ENCODE measurements at regions of chr6 and their contacts with region 1.

Region 1: DNA sequence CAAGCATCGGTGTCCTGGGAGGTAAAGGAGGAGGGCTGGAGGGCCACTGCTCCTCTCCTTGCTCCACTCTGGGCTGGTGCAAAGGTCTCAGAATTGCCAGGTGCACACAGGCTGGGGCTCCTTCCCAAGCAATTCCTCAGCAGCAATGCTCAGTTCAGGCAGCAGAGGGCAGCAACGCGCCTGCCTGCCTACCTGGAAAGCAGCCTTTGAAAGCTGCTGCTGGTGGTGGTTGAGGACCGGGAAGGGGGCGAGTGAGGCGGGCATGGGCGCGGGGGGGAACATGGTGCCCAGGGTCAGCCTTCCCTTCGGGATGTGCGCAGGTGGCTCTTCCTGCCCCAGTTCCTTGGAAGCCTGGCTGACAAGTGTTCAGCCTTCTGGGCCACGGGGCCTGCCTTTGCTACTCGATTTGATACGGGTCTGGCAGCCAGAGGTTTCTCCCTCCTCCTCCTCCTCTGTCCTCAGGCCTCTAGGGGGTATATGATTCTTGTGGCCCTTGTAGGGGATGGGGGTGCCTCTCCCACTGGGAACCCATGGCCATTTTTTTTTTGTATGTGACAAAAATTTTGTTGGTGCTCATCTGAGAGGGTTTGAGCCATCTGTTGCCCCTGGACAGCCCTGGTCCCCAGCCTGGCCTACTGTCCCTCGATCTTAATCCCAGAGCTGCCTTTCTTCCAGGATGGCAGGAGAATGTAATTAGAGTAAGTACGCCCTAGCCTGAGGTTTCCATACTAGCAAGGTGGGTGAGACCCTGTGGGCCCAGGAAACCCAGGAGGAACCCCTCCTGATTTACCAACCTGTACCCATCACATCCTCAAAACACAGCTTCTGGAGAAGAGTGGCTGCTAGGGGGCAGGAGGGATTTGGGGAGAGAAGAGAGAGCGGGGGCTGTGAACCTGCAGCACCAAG is 20.1 kb downstream of the MRPS18A start:
- DNase-seq: peak; percentile 81 to 87
- H3K4me3 ChIP-seq: peak overlapping the region in 1 of 3 donors; percentile 30
- H3K27ac ChIP-seq: peak overlapping the region; percentile 70 to 81
- H3K4me1 ChIP-seq: peaks cover 3 to 16% of the 10 kb centered on the region in 2 donors
- H3K27me3 ChIP-seq: no peaks in the 10 kb centered on the region
- CTCF ChIP-seq: peak; percentile 89 to 95 (median 93)
- POLR2A ChIP-seq: no peak

Region 2: GRCh38 chr6:43733471-43734293 is 66.2 kb after region 1 on chr6:
- intact Hi-C with region 1: no loop called
- DNase-seq: no peak
- H3K4me3 ChIP-seq: no peak overlapping the region
- H3K27ac ChIP-seq: no peak overlapping the region
- H3K4me1 ChIP-seq: no peaks in the 10 kb centered on the region
- H3K27me3 ChIP-seq: no peaks in the 10 kb centered on the region
- CTCF ChIP-seq: no peak
- POLR2A ChIP-seq: no peak

Region 3: DNA sequence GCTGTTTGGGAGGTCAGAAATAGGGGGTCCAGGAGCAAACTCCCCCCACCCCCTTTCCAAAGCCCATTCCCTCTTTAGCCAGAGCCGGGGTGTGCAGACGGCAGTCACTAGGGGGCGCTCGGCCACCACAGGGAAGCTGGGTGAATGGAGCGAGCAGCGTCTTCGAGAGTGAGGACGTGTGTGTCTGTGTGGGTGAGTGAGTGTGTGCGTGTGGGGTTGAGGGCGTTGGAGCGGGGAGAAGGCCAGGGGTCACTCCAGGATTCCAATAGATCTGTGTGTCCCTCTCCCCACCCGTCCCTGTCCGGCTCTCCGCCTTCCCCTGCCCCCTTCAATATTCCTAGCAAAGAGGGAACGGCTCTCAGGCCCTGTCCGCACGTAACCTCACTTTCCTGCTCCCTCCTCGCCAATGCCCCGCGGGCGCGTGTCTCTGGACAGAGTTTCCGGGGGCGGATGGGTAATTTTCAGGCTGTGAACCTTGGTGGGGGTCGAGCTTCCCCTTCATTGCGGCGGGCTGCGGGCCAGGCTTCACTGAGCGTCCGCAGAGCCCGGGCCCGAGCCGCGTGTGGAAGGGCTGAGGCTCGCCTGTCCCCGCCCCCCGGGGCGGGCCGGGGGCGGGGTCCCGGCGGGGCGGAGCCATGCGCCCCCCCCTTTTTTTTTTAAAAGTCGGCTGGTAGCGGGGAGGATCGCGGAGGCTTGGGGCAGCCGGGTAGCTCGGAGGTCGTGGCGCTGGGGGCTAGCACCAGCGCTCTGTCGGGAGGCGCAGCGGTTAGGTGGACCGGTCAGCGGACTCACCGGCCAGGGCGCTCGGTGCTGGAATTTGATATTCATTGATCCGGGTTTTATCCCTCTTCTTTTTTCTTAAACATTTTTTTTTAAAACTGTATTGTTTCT is 102.3 kb after region 1 on chr6 and contains the start of gene VEGFA:
- intact Hi-C with region 1: loop called (anchors 5 kb)
- DNase-seq: peak; percentile 85 to 89
- H3K4me3 ChIP-seq: peak within 1 kb of the TSS; percentile 75 to 93 (median 76)
- H3K27ac ChIP-seq: peak within 1 kb of the TSS; percentile 95 to 96
- H3K4me1 ChIP-seq: peaks cover 0 to 32% of the 10 kb centered on the region in 2 donors
- H3K27me3 ChIP-seq: no peaks in the 10 kb centered on the region
- CTCF ChIP-seq: peak; percentile 96 to 99 (median 98)
- POLR2A ChIP-seq: no peak
- total RNA-seq, gene VEGFA: 123 to 230 (median 132) TPM